ENCODE measurements at regions of chr5 and their contacts with region 1.

Region 1: DNA sequence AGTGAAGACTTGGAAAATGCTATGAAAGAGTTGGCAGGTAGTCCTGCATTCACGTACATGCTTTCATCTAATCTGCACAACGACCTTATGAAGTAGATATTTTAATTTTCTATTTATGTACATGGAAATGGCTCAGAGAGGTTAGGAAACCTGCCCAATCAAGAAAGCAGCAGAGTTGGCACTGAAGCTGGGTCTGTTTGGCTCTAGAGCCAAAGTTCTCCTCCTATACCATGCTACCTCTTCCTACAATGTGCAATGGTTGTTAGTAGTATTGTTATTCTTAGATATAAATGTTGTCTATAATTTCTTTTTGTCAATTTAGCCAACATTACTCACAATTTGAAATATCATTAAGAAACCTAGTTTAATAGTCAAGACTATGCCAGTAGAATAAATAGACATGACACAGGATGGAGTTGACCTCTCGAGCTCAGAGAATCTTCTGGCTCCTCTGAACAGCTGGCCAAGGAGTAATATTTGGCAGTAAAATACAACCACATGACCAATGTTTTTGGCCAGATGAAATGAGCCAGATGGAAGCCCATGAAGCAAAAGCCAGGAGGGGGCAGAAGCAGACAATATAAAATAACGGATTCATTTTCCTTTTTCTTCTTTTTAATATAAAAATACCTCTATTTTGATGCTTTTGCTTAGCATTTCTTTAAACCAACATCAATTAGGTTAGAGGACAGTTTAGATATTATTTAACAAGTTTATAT is 542.3 kb downstream of the PDE4D start:
- DNase-seq: peak in 1 of 3 donors; percentile 39
- ATAC-seq: peak; percentile 89 to 91
- H3K4me3 ChIP-seq: no peak overlapping the region
- H3K27ac ChIP-seq: no peak overlapping the region
- H3K4me1 ChIP-seq: peaks cover 5% of the 10 kb centered on the region
- H3K27me3 ChIP-seq: no peaks in the 10 kb centered on the region

Region 2: GRCh38 chr5:59287320-59287719 is 63.9 kb before region 1 on chr5:
- intact Hi-C with region 1: loop called in 1 of 4 experiments (anchors 10 kb)
- DNase-seq: no peak
- ATAC-seq: peak in 1 of 2 donors; percentile 39
- H3K4me3 ChIP-seq: no peak overlapping the region
- H3K27ac ChIP-seq: no peak overlapping the region
- H3K4me1 ChIP-seq: peaks cover 1% of the 10 kb centered on the region
- H3K27me3 ChIP-seq: no peaks in the 10 kb centered on the region